Caco-2 (cell line): ENCODE measurements at regions of chr10 and their contacts with region 1.

Region 1: DNA sequence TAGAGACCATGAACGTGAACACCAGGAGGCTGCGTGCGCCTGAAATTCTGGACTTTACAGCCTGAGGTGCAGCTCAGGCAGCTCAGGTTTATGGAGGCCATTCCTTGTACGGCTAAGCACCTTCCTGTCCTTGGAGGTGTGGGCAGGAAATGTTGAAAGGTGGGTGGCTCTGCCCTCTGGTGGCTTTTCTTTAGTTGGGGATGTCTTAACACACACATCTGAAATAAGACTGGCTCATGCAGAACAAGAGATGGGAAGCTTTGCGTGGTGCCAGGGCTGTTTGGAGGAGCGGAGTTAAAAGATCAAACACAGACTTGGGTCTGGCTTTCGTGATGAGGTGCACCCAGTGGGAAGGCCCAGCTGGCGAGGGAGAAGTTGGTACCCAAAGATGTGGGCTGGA is 64.1 kb downstream of the DOCK1 start:
- DNase-seq: peak; percentile 48 to 57
- H3K4me3 ChIP-seq: no peak overlapping the region
- H3K4me3 Mint-ChIP-seq: no peak overlapping the region
- H3K27ac Mint-ChIP-seq: no peak overlapping the region
- H3K4me1 ChIP-seq: peaks cover 15% of the 10 kb centered on the region
- H3K4me1 Mint-ChIP-seq: peaks cover 33% of the 10 kb centered on the region
- H3K27me3 ChIP-seq: no peaks in the 10 kb centered on the region
- H3K27me3 Mint-ChIP-seq: no peaks in the 10 kb centered on the region
- CTCF ChIP-seq: peak; percentile 28 to 57

Region 2: GRCh38 chr10:126569513-126570244 is 399.6 kb before region 1 on chr10:
- CTCF ChIA-PET with region 1: no interaction called
- POLR2A ChIA-PET with region 1: no interaction called
- intact Hi-C with region 1: loop called (anchors 10 kb)
- DNase-seq: no peak
- H3K4me3 ChIP-seq: no peak overlapping the region
- H3K4me3 Mint-ChIP-seq: no peak overlapping the region
- H3K27ac Mint-ChIP-seq: no peak overlapping the region
- H3K4me1 ChIP-seq: no peaks in the 10 kb centered on the region
- H3K4me1 Mint-ChIP-seq: no peaks in the 10 kb centered on the region
- H3K27me3 ChIP-seq: no peaks in the 10 kb centered on the region
- H3K27me3 Mint-ChIP-seq: peaks cover 9% of the 10 kb centered on the region
- CTCF ChIP-seq: no peak

Region 3: GRCh38 chr10:126783806-126784557 is 185.3 kb before region 1 on chr10:
- CTCF ChIA-PET with region 1: no interaction called
- POLR2A ChIA-PET with region 1: no interaction called
- intact Hi-C with region 1: loop called (anchors 5 kb)
- DNase-seq: no peak
- H3K4me3 ChIP-seq: no peak overlapping the region
- H3K4me3 Mint-ChIP-seq: peak overlapping the region; percentile 22
- H3K27ac Mint-ChIP-seq: peak overlapping the region; percentile 77
- H3K4me1 ChIP-seq: peaks cover 80% of the 10 kb centered on the region
- H3K4me1 Mint-ChIP-seq: peaks cover 29% of the 10 kb centered on the region
- H3K27me3 ChIP-seq: no peaks in the 10 kb centered on the region
- H3K27me3 Mint-ChIP-seq: no peaks in the 10 kb centered on the region
- CTCF ChIP-seq: no peak

Region 4: GRCh38 chr10:126910798-126911197 is 58.5 kb before region 1 on chr10:
- CTCF ChIA-PET with region 1: interaction called, 3 read pairs
- POLR2A ChIA-PET with region 1: no interaction called
- intact Hi-C with region 1: loop called (anchors 5 kb)
- DNase-seq: no peak
- H3K4me3 ChIP-seq: no peak overlapping the region
- H3K4me3 Mint-ChIP-seq: no peak overlapping the region
- H3K27ac Mint-ChIP-seq: no peak overlapping the region
- H3K4me1 ChIP-seq: peaks cover 11% of the 10 kb centered on the region; the same call in 1 of the 2 replicates
- H3K4me1 Mint-ChIP-seq: peaks cover 15% of the 10 kb centered on the region
- H3K27me3 ChIP-seq: no peaks in the 10 kb centered on the region
- H3K27me3 Mint-ChIP-seq: no peaks in the 10 kb centered on the region
- CTCF ChIP-seq: no peak